PC-3 (cell line): ENCODE measurements at regions of chr3 and their contacts with region 1.

Region 1: GRCh38 chr3:127652231-127652995 is 20.3 kb upstream of the ABTB1 start:
- DNase-seq: peak; percentile 64
- ATAC-seq: peak; percentile 71
- H3K4me3 ChIP-seq: no peak overlapping the region
- H3K27ac ChIP-seq: no peak overlapping the region
- H3K4me1 ChIP-seq: peaks cover 25% of the 10 kb centered on the region
- H3K27me3 ChIP-seq: no peaks in the 10 kb centered on the region
- CTCF ChIP-seq: peak; percentile 85

Region 2: GRCh38 chr3:127723011-127723567 is 70.7 kb after region 1 on chr3:
- CTCF ChIA-PET with region 1: no interaction called
- POLR2A ChIA-PET with region 1: no interaction called
- intact Hi-C with region 1: no loop called
- DNase-seq: no peak
- ATAC-seq: no peak
- H3K4me3 ChIP-seq: no peak overlapping the region
- H3K27ac ChIP-seq: no peak overlapping the region
- H3K4me1 ChIP-seq: no peaks in the 10 kb centered on the region
- H3K27me3 ChIP-seq: no peaks in the 10 kb centered on the region
- CTCF ChIP-seq: no peak

Region 3: GRCh38 chr3:127775398-127776109 is 123.1 kb after region 1 on chr3:
- CTCF ChIA-PET with region 1: no interaction called
- POLR2A ChIA-PET with region 1: no interaction called
- intact Hi-C with region 1: no loop called
- DNase-seq: no peak
- ATAC-seq: no peak
- H3K4me3 ChIP-seq: no peak overlapping the region
- H3K27ac ChIP-seq: no peak overlapping the region
- H3K4me1 ChIP-seq: peaks cover 14% of the 10 kb centered on the region
- H3K27me3 ChIP-seq: no peaks in the 10 kb centered on the region
- CTCF ChIP-seq: no peak

Region 4: DNA sequence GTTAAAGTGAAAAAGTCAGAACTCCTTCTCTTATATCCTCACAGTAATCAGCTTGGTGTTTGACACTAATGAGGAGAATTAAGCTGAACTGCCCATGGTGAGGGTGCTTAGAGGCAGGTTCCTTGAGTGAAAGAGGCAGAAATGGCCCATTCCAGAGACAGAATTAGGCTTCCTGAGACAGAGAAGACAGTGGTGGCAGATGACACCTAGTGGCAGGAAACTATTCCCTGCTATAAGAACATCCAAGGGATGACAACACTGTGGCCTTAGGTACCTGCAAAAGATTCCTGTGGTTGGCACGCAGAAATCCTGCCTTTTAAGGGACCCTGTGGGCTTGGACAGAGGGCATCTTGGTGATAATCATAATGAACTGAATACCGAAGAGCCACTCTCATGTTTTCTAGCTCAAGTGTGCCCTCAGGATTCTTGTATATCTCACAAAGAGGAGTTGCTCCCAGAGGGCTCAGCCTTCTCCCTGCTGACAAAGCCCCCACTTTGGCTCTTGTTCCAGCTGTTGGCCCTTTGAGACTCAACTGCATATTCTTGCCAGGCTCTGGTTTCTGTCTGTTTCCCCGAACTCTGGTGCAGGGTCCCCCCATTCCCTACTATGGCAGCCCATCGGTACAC is 318.7 kb after region 1 on chr3:
- CTCF ChIA-PET with region 1: no interaction called
- POLR2A ChIA-PET with region 1: no interaction called
- intact Hi-C with region 1: loop called (anchors 5 kb)
- DNase-seq: peak; percentile 66
- ATAC-seq: peak; percentile 90
- H3K4me3 ChIP-seq: no peak overlapping the region
- H3K27ac ChIP-seq: no peak overlapping the region
- H3K4me1 ChIP-seq: no peaks in the 10 kb centered on the region
- H3K27me3 ChIP-seq: no peaks in the 10 kb centered on the region
- CTCF ChIP-seq: peak; percentile 76